ENCODE measurements at regions of chr6 and their contacts with region 1.

Region 1: DNA sequence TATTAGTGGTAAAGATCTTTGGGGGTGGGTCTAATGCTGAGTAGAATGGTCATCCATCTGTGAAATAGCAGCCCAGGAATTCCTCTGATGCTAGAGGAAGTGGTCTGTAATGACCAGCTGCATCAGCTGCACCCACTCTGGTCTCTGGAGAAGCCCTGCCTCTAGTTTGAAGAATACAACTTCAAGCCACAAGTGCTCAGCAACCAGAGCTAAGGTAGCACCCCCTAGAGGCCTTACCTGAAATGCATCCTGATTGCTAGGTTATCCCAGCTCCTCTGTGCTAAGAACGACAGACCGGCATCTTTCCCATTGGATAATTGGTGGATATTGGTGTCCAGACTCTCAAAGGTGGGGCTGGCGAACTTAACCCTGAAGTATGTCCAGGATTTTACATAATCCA is 58.2 kb downstream of the DNAH8 start:
- DNase-seq: peak in 1 of 2 experiments; percentile 82
- H3K4me3 ChIP-seq: no peak overlapping the region
- H3K27ac ChIP-seq: no peak overlapping the region
- H3K4me1 ChIP-seq: no peaks in the 10 kb centered on the region
- H3K27me3 ChIP-seq: no peaks in the 10 kb centered on the region
- CTCF ChIP-seq: peak; percentile 33 to 93 (median 74)
- EP300 ChIP-seq: no peak
- POLR2A ChIP-seq: no peak
- RAD21 ChIP-seq: peak; percentile 62 to 72

Region 2: DNA sequence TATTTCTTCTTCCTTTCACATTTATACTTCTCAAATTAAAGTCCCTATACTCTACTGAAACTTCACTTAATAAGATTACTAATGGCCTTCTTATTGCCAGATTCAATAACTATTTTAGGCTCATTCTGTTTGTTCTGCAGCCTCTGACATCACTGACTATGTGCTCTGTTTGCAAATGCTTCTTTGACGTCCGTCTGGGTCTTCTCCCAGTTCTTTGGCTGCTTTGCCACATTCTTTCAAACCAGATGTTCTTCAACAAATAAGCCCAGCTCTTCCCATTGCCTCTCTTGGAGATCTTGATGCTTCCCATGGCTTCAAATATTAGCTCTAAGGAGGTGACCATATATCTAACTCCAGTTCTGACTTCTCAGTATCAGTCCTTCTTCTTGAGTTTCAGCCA is 251.0 kb before region 1 on chr6:
- CTCF ChIA-PET with region 1: no interaction called
- POLR2A ChIA-PET with region 1: no interaction called
- DNase-seq: no peak
- H3K4me3 ChIP-seq: no peak overlapping the region
- H3K27ac ChIP-seq: no peak overlapping the region
- H3K4me1 ChIP-seq: peaks cover 0 to 5% (median 0%) of the 10 kb centered on the region in 4 experiments; a peak in 1 of 7 replicates
- H3K27me3 ChIP-seq: no peaks in the 10 kb centered on the region; a peak in 1 of 7 replicates
- CTCF ChIP-seq: no peak
- EP300 ChIP-seq: no peak
- POLR2A ChIP-seq: no peak
- RAD21 ChIP-seq: no peak

Region 3: GRCh38 chr6:38651121-38651784 is 122.1 kb before region 1 on chr6:
- CTCF ChIA-PET with region 1: no interaction called
- POLR2A ChIA-PET with region 1: no interaction called
- DNase-seq: no peak
- H3K4me3 ChIP-seq: no peak overlapping the region
- H3K27ac ChIP-seq: no peak overlapping the region
- H3K4me1 ChIP-seq: peaks cover 0 to 3% (median under 1%) of the 10 kb centered on the region in 4 experiments; a peak in 2 of 7 replicates
- H3K27me3 ChIP-seq: no peaks in the 10 kb centered on the region
- CTCF ChIP-seq: no peak
- EP300 ChIP-seq: no peak
- POLR2A ChIP-seq: no peak
- RAD21 ChIP-seq: no peak

Region 4: DNA sequence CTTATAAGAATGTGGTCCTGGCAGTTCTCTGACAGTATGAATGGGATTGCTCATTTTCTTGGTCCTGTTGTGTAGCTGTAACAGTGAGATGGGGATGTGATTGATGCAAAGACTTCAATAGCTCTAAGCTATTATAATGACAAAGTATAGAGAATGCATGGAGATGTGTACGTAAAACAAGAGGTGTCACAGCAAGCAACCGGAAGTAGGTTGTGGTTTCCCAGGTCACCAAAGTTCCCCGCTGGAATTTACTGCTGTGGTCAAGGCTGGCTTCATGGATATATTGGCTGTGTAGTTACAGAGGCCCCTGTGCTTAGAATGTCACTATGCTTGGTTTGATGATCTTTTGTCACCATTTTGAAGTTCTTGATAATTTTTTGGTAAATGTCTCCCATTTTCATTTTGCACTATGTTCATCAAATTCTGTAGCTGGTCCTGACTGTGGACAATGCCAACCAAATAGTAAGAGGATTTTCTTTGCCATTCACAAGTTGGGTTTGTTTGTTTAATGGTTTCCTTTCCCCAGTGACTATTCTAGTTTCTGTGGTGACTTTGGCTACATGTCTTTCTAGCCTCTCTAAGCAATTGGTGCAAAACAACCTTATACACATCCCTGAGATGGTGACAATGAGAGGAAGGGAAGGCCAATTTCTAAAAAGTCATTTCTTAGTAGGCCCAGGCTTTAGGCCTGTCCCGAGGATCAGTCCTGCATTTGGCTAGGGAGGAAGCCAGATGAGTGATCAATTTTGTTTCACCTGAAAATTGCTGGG is 47.7 kb before region 1 on chr6:
- CTCF ChIA-PET with region 1: interaction called, 10 read pairs
- POLR2A ChIA-PET with region 1: no interaction called
- DNase-seq: no peak
- H3K4me3 ChIP-seq: no peak overlapping the region
- H3K27ac ChIP-seq: no peak overlapping the region
- H3K4me1 ChIP-seq: no peaks in the 10 kb centered on the region
- H3K27me3 ChIP-seq: no peaks in the 10 kb centered on the region
- CTCF ChIP-seq: no peak
- EP300 ChIP-seq: no peak
- POLR2A ChIP-seq: no peak
- RAD21 ChIP-seq: no peak

Region 5: GRCh38 chr6:38739532-38739931 is 33.8 kb before region 1 on chr6:
- CTCF ChIA-PET with region 1: no interaction called
- POLR2A ChIA-PET with region 1: no interaction called
- DNase-seq: no peak
- H3K4me3 ChIP-seq: no peak overlapping the region
- H3K27ac ChIP-seq: no peak overlapping the region
- H3K4me1 ChIP-seq: no peaks in the 10 kb centered on the region
- H3K27me3 ChIP-seq: no peaks in the 10 kb centered on the region
- CTCF ChIP-seq: peak in 1 of 3 experiments; percentile 11; a peak in 1 of 4 replicates
- EP300 ChIP-seq: no peak
- POLR2A ChIP-seq: no peak
- RAD21 ChIP-seq: no peak

Region 6: GRCh38 chr6:38792346-38792745 is 19.0 kb after region 1 on chr6:
- CTCF ChIA-PET with region 1: interaction called, 14 read pairs
- POLR2A ChIA-PET with region 1: no interaction called
- DNase-seq: no peak
- H3K4me3 ChIP-seq: no peak overlapping the region
- H3K27ac ChIP-seq: no peak overlapping the region
- H3K4me1 ChIP-seq: no peaks in the 10 kb centered on the region; a peak in 1 of 7 replicates
- H3K27me3 ChIP-seq: no peaks in the 10 kb centered on the region
- CTCF ChIP-seq: no peak
- EP300 ChIP-seq: no peak
- POLR2A ChIP-seq: no peak
- RAD21 ChIP-seq: no peak

Region 7: DNA sequence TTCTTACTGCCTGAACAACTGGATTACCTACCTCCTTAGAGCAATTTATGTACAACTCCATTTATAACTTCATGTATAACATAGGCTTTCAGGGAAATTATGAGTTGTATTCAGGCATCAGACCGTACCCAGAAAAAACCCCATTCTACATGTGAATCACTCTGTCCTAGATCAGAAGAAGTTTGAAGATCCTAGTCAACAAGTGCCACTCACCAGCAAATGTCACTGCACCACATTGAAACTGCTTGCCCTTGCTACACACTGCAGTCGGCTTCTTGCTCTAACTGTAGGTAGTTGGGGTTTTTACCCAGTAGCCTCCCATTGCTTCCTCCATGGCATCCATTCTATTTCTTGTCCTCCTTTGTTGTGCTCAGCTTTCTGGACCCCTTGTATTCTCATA is 74.2 kb after region 1 on chr6:
- CTCF ChIA-PET with region 1: no interaction called
- POLR2A ChIA-PET with region 1: no interaction called
- DNase-seq: no peak
- H3K4me3 ChIP-seq: no peak overlapping the region
- H3K27ac ChIP-seq: no peak overlapping the region
- H3K4me1 ChIP-seq: no peaks in the 10 kb centered on the region
- H3K27me3 ChIP-seq: peaks cover 0 to 1% (median 0%) of the 10 kb centered on the region in 4 experiments; a peak in 1 of 7 replicates
- CTCF ChIP-seq: no peak
- EP300 ChIP-seq: no peak
- POLR2A ChIP-seq: no peak
- RAD21 ChIP-seq: no peak

Measured in H1 (cell line).